Left cardiac atrium (tissue), 4 donors: ENCODE measurements at regions of chr13 and their contacts with region 1.

Region 1: DNA sequence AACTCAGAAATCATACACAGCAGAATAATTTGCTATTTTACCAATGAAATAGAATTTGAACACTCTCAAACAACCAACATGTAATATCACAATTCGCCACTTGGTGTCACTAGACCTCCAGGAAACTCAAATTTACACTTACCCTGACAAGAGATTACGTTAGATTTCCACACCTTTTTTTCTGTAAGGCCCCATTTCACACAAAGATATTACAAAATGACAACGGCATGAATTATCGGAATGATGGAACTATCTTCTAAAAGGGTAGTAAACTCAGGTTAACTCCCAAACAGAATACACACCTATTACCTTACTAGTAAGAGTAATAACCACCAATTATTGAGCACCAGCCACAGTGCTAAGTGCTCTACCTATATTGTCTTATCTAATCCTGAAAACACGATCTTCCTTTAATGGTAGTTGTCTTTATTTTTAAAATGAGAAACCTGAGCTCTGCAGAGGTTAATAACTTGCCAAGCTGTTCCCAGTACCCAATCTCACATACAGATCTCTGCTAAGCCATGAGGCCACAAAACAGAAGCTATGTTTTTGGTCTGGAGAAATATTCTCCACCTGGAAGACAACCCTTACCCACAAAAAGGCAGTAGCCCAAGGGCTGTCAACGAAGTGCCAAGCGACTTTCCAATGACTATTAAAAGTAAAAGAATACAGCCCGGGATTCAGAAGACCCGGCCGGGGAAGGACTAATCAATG is 152.4 kb downstream of the DCLK1 start:
- DNase-seq: no peak
- ATAC-seq: peak; percentile 58 to 65

Region 2: GRCh38 chr13:35279500-35279899 is 699.3 kb before region 1 on chr13:
- intact Hi-C with region 1: no loop called
- DNase-seq: no peak
- ATAC-seq: no peak

Region 3: GRCh38 chr13:36275190-36276002 is 296.6 kb after region 1 on chr13:
- intact Hi-C with region 1: loop called (anchors 1 to 5 kb)
- DNase-seq: no peak
- ATAC-seq: peak; percentile 30 to 52